Heart right ventricle (tissue), 16 donors: ENCODE measurements at regions of chr12 and their contacts with region 1.

Region 1: DNA sequence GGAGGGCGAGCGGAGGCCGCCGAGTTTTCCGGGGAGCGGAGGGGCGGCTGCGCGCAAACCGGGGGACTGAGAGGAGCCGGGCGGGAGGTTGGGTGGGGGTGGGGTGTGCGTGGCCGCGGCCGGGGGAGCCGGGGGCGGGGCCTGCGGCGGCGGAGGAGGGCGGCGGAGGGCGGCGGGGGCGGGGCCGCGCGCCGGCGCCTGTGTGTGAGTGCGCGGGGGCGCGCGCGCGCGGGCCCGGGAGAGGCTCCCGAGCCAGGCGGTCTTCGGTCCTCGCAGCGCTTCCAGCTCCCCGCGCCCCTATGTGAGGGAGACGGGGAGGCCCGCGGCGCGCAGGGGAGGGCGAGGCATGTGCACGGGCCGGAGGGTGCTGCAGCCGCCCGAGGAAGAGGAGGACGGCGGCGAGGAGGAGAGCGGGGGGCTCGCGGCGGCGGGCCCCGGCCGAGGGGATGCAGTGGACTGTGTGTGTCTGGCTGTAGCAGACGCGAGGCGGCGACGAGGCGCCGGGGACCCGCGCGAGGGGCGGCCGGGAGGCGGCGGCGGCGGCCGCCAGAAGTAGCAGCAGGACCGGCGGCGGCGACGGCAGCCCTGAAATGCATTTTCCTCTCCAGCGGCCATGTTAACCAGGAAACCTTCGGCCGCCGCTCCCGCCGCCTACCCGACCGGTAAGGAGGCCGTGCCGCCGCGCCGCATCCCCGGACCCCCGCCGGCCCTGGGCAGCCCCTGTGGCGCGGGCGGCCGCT is at the start of gene DYRK2:
- DNase-seq: peak; percentile 79 to 85
- ATAC-seq: peak; percentile 60 to 79 (median 70)
- H3K4me3 ChIP-seq: peak within 1 kb of the TSS; percentile 51 to 99 (median 91)
- H3K27ac ChIP-seq: peak within 1 kb of the TSS; percentile 95 to 99 (median 98)
- H3K4me1 ChIP-seq: peaks cover 0 to 45% (median 39%) of the 10 kb centered on the region in 9 donors
- H3K27me3 ChIP-seq: no peaks in the 10 kb centered on the region
- CTCF ChIP-seq: peak in 6 of 9 donors; percentile 8 to 47 (median 21)
- total RNA-seq, gene DYRK2: 30.0 to 55.8 (median 44.2) TPM

Region 2: GRCh38 chr12:67355578-67356379 is 292.9 kb before region 1 on chr12:
- intact Hi-C with region 1: loop called in 2 of 10 experiments (anchors 5 to 10 kb)
- DNase-seq: no peak
- ATAC-seq: peak; percentile 54 to 72 (median 66)
- H3K4me3 ChIP-seq: no peak overlapping the region
- H3K27ac ChIP-seq: peak overlapping the region in 5 of 10 donors; percentile 8 to 57 (median 31)
- H3K4me1 ChIP-seq: peaks cover 4 to 52% (median 37%) of the 10 kb centered on the region in 9 donors
- H3K27me3 ChIP-seq: no peaks in the 10 kb centered on the region
- CTCF ChIP-seq: peak; percentile 26 to 74 (median 65)

Region 3: DNA sequence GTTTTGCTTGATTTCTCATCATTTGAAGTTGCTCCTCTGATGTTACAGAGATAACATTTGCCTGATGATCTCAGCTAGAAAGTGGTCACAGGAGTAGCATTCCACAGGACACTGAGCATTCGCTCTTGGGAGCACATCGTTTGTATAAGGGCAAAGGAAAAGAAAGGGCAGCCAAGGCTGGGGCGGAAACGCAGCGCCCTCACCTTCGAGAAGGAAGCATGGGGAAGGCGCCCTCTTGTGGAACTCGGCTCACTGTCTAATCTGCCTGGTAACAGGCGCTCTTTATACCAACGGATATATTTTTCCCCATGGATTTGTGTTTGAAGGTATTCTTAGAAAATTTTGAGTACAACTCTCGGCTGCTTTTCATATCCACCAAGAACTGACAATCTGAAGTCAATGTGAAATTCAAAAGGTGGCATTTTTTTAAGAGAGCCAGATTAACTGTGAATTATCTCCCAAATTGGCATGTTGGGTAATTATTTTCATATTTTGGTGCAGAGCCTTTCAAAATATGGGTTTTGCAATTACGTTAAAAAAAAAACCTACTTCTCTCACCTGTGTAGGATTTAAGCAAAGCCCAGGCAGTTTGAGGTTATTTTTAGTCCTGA is 206.8 kb before region 1 on chr12:
- intact Hi-C with region 1: loop called in 7 of 10 experiments (anchors 2 to 10 kb)
- DNase-seq: peak; percentile 86 to 90
- ATAC-seq: peak; percentile 96 to 98 (median 97)
- H3K4me3 ChIP-seq: peak overlapping the region in 6 of 10 donors; percentile 6 to 25 (median 22)
- H3K27ac ChIP-seq: peak overlapping the region in 8 of 10 donors; percentile 6 to 66 (median 40)
- H3K4me1 ChIP-seq: peaks cover 5 to 19% (median 17%) of the 10 kb centered on the region in 9 donors
- H3K27me3 ChIP-seq: no peaks in the 10 kb centered on the region
- CTCF ChIP-seq: peak; percentile 51 to 96 (median 84)

Region 4: DNA sequence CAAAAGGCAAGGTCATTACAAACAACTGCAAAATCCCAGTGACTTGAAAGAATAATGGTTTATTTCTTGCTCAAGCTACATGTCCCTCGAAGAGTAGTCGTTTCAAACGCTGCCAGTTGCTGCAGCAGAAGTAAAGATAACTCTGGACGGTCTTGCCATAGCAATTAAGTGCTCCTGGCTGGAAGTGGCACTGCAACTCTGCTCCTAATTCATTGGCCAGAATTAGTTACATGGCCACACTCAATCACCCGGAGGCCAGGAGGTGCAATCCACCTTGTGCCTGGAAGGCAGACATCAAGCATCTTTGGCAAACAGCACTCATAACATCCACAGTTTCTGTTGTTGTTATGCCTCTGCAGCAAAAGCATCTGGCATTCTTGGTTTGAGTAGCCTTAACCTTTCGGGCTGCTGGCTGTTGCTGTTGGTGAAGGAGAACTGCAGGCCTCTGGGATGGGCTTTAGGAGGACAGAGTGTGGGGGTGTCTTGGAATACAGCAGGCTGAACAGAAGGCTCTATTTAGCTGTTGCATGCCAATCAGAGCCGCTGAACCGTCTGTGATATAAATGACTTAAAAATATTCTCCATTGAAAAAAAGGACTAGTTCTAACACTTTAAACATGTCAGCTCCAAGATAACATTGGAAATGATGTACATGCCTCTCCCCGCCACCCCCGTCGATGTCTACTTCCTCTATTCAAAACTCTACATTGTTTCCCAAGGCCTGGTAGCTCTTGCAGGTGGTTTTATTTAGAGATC is 123.7 kb before region 1 on chr12:
- intact Hi-C with region 1: no loop called
- DNase-seq: peak in 1 of 2 donors; percentile 17
- ATAC-seq: peak in 6 of 8 donors; percentile 44 to 89 (median 72)
- H3K4me3 ChIP-seq: no peak overlapping the region
- H3K27ac ChIP-seq: no peak overlapping the region
- H3K4me1 ChIP-seq: peaks cover 0 to 8% (median 0%) of the 10 kb centered on the region in 9 donors
- H3K27me3 ChIP-seq: no peaks in the 10 kb centered on the region
- CTCF ChIP-seq: peak in 1 of 9 donors; percentile 15

Region 5: GRCh38 chr12:67698672-67699581 is 50.2 kb after region 1 on chr12:
- intact Hi-C with region 1: loop called in 2 of 10 experiments (anchors 5 to 10 kb)
- DNase-seq: no peak
- ATAC-seq: peak in 7 of 8 donors; percentile 15 to 47 (median 38)
- H3K4me3 ChIP-seq: peak overlapping the region in 8 of 10 donors; percentile 4 to 43 (median 33)
- H3K27ac ChIP-seq: peak overlapping the region in 6 of 10 donors; percentile 17 to 76 (median 26)
- H3K4me1 ChIP-seq: peaks cover 0 to 28% (median 18%) of the 10 kb centered on the region in 9 donors
- H3K27me3 ChIP-seq: no peaks in the 10 kb centered on the region
- CTCF ChIP-seq: no peak

Region 6: GRCh38 chr12:67720351-67720856 is 71.7 kb after region 1 on chr12:
- intact Hi-C with region 1: loop called in 2 of 10 experiments (anchors 10 kb)
- DNase-seq: peak in 1 of 2 donors; percentile 67
- ATAC-seq: peak; percentile 73 to 88 (median 82)
- H3K4me3 ChIP-seq: no peak overlapping the region
- H3K27ac ChIP-seq: peak overlapping the region; percentile 18 to 86 (median 69)
- H3K4me1 ChIP-seq: peaks cover 0 to 45% (median 18%) of the 10 kb centered on the region in 9 donors
- H3K27me3 ChIP-seq: no peaks in the 10 kb centered on the region
- CTCF ChIP-seq: no peak

Region 7: GRCh38 chr12:67804168-67804567 is 155.5 kb after region 1 on chr12:
- intact Hi-C with region 1: no loop called
- DNase-seq: no peak
- ATAC-seq: no peak
- H3K4me3 ChIP-seq: no peak overlapping the region
- H3K27ac ChIP-seq: no peak overlapping the region
- H3K4me1 ChIP-seq: peaks cover 0 to 21% (median 7%) of the 10 kb centered on the region in 9 donors
- H3K27me3 ChIP-seq: no peaks in the 10 kb centered on the region
- CTCF ChIP-seq: no peak

Region 8: DNA sequence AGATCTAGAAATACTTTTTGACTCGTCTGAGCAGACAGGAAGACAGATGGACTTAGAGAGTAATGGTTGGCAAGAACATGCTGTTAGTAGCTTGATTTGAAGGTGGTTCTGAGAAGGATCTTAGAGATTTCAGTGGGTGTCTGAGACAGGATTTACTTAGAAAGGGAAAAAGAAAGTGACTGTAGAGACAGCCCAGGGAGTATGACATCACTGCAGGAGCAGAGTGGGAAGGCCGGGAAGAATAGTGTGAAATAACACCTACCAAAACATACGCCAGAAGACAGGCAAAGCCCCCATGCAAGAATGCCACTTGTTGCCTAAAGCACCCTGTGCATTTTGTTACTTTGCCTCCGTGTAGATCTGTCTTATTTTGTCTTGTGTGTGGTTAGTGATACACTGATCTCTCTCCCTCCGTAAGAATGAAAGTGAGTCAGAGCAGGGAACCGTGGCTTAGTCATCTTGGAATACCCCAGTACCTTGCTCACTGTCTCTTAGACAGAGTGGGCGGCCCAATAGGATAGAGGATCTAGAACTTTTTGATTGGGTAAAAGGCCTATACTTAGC is 179.2 kb after region 1 on chr12:
- intact Hi-C with region 1: loop called in 1 of 10 experiments (anchors 10 kb)
- DNase-seq: peak in 1 of 2 donors; percentile 40
- ATAC-seq: peak; percentile 86 to 98 (median 93)
- H3K4me3 ChIP-seq: peak overlapping the region in 9 of 10 donors; percentile 12 to 48 (median 37)
- H3K27ac ChIP-seq: peak overlapping the region; percentile 46 to 89 (median 79)
- H3K4me1 ChIP-seq: peaks cover 0 to 31% (median 19%) of the 10 kb centered on the region in 9 donors
- H3K27me3 ChIP-seq: no peaks in the 10 kb centered on the region
- CTCF ChIP-seq: no peak